Posterior cingulate gyrus (tissue), 11 donors: ENCODE measurements at regions of chr20 and their contacts with region 1.

Region 1: GRCh38 chr20:15759594-15759993 is 813.7 kb downstream of the KIF16B start:
- DNase-seq: peak in 1 of 10 donors; percentile 17

Region 2: DNA sequence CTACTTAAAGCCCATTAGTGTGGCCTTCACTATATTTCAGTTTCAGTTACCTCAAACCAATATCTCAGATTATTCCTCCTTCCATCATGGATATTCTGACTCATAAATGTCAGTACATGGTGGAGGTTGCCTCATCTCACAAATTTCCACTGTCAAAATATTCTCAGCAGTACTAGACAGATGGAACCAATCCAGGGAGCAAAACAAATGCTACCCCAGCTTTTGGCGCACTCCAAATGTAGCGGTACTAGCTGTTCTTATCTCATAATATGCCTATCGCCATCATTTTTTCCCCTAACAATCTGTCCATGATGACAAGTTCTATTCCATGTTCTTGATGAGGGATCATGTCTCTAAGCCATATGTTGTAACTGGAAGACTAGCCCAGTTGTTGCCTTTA is 212.5 kb before region 1 on chr20:
- intact Hi-C with region 1: no loop called
- DNase-seq: no peak

Region 3: DNA sequence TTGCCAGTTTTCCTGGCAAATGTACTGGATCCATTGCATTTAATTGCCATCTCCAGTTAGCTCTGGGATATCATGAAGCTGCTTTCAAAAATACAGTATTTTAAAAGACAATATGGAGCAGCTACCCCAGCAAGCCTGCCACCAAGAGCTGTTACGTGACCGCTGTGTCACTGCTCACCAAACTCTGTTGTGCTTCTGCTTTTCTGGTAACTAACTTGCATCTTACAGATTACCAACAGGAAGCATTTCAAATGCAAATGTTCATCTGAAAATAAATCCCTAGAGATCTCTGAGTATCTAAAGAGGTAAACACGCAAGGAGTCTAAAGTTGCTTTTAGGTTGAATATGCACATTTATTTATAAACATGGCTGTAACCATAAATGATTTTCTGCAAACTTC is 194.6 kb before region 1 on chr20:
- intact Hi-C with region 1: loop called (anchors 10 kb)
- DNase-seq: no peak